ENCODE measurements at regions of chr16 and their contacts with region 1.

Region 1: DNA sequence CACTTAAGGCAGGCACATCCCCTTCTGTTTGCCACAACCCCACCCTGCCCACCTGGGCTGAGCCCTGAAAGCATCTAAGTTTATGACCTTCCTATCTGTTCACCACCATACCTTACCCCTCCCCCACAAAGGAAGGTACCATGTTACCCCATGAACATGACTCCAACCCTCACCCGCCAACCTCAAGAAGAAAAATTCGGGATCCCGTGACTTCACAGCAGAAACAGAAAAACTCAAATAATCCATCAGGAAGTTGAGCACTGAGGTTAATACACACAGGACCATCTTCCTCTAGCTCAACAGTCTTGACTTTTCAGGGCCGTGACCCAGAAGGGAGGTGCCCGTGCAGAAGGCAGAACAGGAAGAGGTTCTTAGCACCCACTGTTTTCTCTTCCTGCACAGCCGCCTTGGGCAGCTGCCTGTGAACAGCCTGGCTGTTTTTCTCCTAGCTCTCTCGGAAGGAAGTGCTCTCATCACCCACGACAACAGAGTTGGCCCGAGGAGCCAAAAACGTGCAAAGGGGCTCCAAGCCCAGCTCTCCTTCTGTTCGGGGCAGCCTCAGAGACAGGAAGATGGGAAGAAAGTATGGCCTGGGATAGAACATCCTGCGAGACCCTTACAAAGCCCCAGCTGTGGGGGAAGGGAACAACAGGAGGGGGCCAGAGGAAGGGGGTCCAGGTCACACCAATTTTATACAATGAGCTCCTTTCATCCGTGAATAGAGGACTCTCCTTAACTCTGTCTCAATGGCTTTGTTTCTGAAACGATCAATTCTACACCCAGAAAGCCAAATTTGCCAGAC is 101.1 kb downstream of the XYLT1 start:
- DNase-seq: peak; percentile 53
- ATAC-seq: peak; percentile 94
- H3K4me3 ChIP-seq: peak overlapping the region; percentile 41; the same call in 1 of the 2 replicates
- H3K27ac ChIP-seq: peak overlapping the region; percentile 36
- H3K4me1 ChIP-seq: peaks cover 52% of the 10 kb centered on the region
- H3K27me3 ChIP-seq: no peaks in the 10 kb centered on the region
- CTCF ChIP-seq: no peak
- EP300 ChIP-seq: peak in 1 of 2 experiments; percentile 49; a peak in 1 of 4 replicates
- POLR2A ChIP-seq: peak; percentile 50
- RAD21 ChIP-seq: no peak

Region 2: GRCh38 chr16:17404941-17405689 is 35.5 kb after region 1 on chr16:
- CTCF ChIA-PET with region 1: no interaction called
- POLR2A ChIA-PET with region 1: no interaction called
- RAD21 ChIA-PET with region 1: interaction called, 6 read pairs
- SMC1A ChIA-PET with region 1: interaction called, 8 read pairs
- in situ Hi-C with region 1: no loop called
- intact Hi-C with region 1: loop called (anchors 5 kb)
- DNase-seq: no peak
- ATAC-seq: no peak
- H3K4me3 ChIP-seq: no peak overlapping the region
- H3K27ac ChIP-seq: no peak overlapping the region
- H3K4me1 ChIP-seq: peaks cover 24% of the 10 kb centered on the region
- H3K27me3 ChIP-seq: no peaks in the 10 kb centered on the region
- CTCF ChIP-seq: no peak
- EP300 ChIP-seq: no peak
- POLR2A ChIP-seq: no peak
- RAD21 ChIP-seq: no peak

Region 3: DNA sequence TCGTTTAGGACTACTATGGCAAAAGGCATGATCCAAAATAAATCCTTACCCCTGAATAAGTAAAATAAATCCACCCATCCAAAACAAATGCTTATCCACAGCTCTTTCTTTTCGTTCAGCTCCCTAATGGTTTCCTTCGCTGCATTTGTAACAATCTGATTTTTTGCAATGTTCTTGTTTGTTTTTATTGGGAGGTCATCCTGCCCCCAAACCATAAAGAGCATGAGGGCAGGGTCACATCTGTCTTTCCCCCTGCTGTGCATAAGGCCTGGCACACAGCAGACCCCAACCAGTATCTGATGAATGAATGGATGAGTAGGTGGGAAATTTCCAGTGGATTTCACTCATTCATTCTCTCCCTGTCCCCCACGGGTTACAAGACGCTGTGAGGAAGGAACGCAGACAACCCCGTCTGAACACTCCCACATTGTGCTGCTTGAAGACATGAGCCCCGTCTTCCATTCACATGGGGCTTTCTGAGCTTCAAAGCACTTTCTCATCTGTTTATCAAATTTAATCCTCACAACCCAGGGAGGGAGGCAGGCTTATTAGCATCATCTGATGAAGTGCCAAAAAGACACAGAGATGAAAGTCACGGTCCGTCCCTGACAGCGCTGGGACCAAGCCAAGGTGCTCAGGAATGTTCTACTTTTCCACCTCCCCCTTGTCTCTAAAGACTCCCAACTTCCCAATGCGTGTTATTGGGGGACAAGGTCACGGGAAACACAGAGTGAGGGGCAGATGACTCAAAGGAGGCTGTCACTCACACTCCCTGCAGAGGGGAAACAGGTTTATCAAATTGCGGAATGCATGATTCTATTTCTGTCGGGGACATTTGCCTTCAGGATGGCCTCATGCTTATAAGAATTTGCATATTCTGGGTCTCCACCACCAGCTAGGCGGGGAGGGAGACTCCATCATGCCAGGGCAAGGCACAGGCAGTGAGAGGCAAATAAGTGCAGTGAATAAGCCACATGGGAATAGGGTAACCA is 90.2 kb after region 1 on chr16:
- CTCF ChIA-PET with region 1: interaction called, 4 read pairs
- POLR2A ChIA-PET with region 1: no interaction called
- RAD21 ChIA-PET with region 1: interaction called, 12 read pairs
- SMC1A ChIA-PET with region 1: interaction called, 6 read pairs
- in situ Hi-C with region 1: no loop called
- intact Hi-C with region 1: loop called (anchors 5 kb)
- DNase-seq: no peak
- ATAC-seq: peak; percentile 72
- H3K4me3 ChIP-seq: no peak overlapping the region; the same call in 1 of the 2 replicates
- H3K27ac ChIP-seq: no peak overlapping the region
- H3K4me1 ChIP-seq: peaks cover 40% of the 10 kb centered on the region
- H3K27me3 ChIP-seq: no peaks in the 10 kb centered on the region
- CTCF ChIP-seq: no peak
- EP300 ChIP-seq: no peak
- POLR2A ChIP-seq: no peak
- RAD21 ChIP-seq: no peak

Region 4: GRCh38 chr16:17509204-17509603 is 139.6 kb after region 1 on chr16:
- CTCF ChIA-PET with region 1: no interaction called
- POLR2A ChIA-PET with region 1: no interaction called
- RAD21 ChIA-PET with region 1: no interaction called
- SMC1A ChIA-PET with region 1: no interaction called
- in situ Hi-C with region 1: no loop called
- intact Hi-C with region 1: no loop called
- DNase-seq: no peak
- ATAC-seq: no peak
- H3K4me3 ChIP-seq: no peak overlapping the region
- H3K27ac ChIP-seq: no peak overlapping the region
- H3K4me1 ChIP-seq: no peaks in the 10 kb centered on the region
- H3K27me3 ChIP-seq: 0 out of 4 replicates have a peak, but pooled peaks cover 0 to 3% of the 10 kb centered on the region in 2 experiments
- CTCF ChIP-seq: no peak
- EP300 ChIP-seq: no peak
- POLR2A ChIP-seq: no peak
- RAD21 ChIP-seq: no peak